AG04449 (cell line): ENCODE measurements at regions of chr14 and their contacts with region 1.

Region 1: GRCh38 chr14:23327947-23328744 is 6.9 kb downstream of the PABPN1 start:
- DNase-seq: no peak
- H3K4me3 ChIP-seq: no peak overlapping the region
- CTCF ChIP-seq: peak; percentile 73

Region 2: GRCh38 chr14:23047034-23047634 is 281.0 kb before region 1 on chr14:
- CTCF ChIA-PET with region 1: no interaction called
- POLR2A ChIA-PET with region 1: no interaction called
- DNase-seq: no peak
- H3K4me3 ChIP-seq: no peak overlapping the region
- CTCF ChIP-seq: no peak

Region 3: DNA sequence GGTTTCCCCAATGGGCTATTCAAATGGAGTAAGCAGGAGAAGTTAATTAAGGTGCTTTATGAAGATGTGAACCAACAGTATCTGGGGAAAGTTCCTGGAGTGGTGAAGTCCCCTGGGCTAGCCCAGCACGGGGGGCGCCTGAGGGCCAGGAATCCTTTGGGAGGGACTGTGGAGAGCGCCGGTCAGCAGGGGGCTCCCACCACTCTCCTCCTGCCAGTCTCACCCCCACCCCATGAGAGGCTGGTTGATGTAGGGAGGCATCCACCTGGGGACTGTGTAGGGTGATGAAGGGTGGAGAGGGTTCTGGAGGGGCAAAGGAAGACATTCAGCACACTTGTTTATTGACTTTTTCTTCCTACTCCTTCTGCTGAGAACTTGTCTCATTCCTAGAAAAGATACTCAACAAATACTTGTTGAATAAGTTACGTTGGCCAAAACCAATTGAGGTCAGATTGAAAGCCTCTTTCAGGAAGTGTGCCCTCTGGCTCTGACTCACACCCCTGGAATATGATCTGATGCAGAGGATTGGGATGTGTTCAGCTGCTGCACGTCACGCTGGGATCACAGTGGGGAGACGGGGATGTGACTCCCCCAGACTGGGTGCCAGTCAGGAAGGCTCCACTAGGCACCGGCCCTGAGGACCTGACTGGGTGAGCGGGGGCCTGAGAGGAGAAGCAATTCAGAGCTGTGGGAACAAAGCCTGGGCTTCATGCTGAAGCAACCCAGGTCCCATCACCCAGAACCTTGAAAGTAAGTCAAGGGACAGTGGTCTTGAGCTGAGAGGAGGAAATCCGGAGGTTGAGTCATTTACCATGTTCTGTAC is 213.3 kb before region 1 on chr14:
- CTCF ChIA-PET with region 1: no interaction called
- POLR2A ChIA-PET with region 1: no interaction called
- DNase-seq: peak; percentile 97
- H3K4me3 ChIP-seq: 0 out of 2 replicates have a peak overlapping the region, but pooled peaks have one; percentile 20
- CTCF ChIP-seq: peak; percentile 7

Region 4: DNA sequence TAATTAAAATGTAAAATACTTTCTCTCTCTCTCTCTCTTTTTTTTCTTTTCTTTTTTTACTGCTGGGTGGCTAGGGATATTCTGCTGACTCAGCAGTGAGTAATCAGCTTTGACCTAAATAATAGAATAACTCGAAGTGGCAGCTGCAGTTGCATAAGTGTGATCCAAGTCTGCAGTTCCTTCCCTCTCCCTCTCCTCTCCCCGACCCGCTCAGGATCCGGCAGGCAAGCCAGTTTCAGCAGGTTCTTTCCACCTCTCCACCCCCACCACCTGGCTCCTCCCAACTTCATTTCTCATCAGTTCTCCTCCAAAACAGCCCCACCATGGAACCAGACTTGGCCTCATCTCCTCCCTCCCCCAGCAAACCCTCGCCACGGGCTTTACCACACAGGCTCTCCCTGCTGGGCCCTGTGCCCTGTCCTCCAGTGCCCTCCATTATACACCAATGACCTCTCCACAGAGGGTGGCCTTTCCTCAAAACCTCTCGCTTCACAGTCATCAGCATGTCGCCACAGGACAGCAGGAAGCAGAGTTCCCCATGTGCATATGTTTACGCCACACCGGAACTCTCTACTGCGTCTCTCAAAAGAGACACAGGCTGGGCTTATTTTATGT is 167.1 kb before region 1 on chr14:
- CTCF ChIA-PET with region 1: no interaction called
- POLR2A ChIA-PET with region 1: no interaction called
- DNase-seq: no peak
- H3K4me3 ChIP-seq: no peak overlapping the region
- CTCF ChIP-seq: no peak

Region 5: DNA sequence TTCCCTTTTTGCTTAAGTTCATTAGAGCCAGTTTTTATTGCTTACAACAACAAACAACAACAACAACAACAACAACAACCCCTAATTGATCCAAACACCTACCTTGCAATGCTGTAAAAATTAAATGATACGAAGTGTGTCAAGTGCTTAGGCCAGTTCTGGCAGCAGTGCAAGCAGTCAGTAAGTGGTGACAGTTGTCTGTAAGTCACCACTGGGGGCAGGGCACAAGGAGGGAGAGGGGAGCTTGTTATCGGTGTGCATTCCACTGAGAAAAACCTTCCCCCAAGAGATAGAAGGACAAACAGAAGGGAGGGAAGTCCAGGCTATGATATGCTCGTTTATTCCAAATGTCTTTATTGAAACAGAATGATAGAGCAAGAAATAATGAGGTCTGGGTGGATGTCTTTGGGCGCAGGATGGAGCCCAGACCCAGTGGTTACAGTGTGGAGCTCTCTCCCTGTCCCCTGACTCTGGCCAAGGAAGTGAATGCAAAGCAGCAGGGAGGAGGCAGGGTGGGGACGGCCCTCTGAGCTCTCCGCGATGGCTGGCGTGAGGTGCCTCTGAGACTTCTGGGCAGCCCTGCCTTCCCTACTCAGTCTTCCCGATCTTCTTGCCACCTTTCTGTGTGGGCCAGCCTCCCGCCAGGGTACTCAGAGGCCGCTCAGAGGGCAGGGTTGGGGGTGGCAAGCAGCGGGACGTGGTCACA is 18.0 kb after region 1 on chr14:
- CTCF ChIA-PET with region 1: interaction called, 12 read pairs
- POLR2A ChIA-PET with region 1: no interaction called
- DNase-seq: no peak
- H3K4me3 ChIP-seq: no peak overlapping the region
- CTCF ChIP-seq: no peak

Region 6: GRCh38 chr14:23366426-23366921 is 38.3 kb after region 1 on chr14:
- CTCF ChIA-PET with region 1: interaction called, 34 read pairs
- POLR2A ChIA-PET with region 1: no interaction called
- DNase-seq: no peak
- H3K4me3 ChIP-seq: peak overlapping the region; percentile 74
- CTCF ChIP-seq: no peak

Region 7: DNA sequence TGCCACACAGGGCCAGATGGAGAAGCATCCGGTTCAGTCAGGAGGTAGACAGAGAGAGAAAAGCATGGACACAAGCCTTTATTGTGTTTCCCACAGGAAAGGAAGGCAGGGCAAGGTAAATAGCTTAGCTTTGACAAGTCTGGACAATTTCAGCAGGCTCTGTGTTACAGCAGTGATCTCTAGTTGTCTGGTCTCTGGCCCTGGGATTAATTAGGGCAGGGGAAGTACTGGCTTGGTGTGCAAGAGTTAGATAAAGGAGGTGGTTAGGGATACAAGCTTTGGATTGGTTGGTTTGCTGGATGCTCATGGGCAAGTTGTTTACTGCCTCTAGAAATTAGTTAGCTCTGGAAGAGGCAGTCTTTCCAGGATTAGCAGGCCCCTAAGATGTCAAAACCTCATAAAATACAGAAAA is 126.3 kb after region 1 on chr14:
- CTCF ChIA-PET with region 1: interaction called, 10 read pairs
- POLR2A ChIA-PET with region 1: no interaction called
- DNase-seq: no peak
- H3K4me3 ChIP-seq: no peak overlapping the region
- CTCF ChIP-seq: no peak

Region 8: DNA sequence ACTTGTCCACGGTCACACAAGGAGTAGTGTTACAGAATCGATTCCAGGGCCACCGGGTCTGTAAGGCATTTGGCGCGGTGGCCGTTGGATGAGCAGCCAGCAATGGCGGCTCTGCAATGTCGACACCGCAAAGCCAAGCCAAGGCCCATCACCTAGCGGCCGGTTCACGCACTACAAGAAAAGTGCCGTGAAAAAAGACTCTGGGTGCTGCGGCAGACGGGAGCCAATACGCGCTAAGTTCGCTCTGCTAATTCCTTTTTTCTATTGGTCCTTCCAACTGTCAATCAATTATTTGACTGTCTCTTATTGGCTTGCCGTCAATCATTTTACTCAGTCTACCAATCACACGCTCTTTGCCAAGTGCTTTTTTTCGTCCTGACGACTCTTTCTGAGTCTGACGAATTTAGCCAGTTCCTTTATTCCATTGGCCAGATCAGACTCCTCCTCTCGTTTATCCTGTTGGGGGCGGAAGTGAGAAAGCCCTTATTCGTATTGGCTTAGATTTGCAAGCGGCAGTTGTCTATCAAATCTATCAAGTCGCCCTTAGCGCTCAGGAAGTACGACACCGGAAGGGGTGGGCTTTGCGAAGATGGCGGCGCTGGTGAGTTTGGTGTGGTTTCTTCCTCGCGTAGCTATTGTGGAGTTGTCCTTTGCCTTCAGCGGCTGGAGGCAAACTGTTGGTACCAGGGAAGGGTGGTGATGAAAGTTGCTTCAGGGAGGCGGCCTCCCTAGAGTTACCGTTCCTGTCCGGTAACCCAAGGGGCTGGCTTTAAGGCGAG is 141.2 kb after region 1 on chr14 and contains the start of gene NGDN:
- CTCF ChIA-PET with region 1: interaction called, 12 read pairs
- POLR2A ChIA-PET with region 1: no interaction called
- DNase-seq: peak; percentile 100
- H3K4me3 ChIP-seq: peak within 1 kb of the TSS; percentile 98
- CTCF ChIP-seq: peak; percentile 82

Region 9: GRCh38 chr14:23567192-23568020 is 239.3 kb after region 1 on chr14 and contains the start of gene AP1G2:
- CTCF ChIA-PET with region 1: interaction called, 11 read pairs
- POLR2A ChIA-PET with region 1: no interaction called
- DNase-seq: no peak
- H3K4me3 ChIP-seq: peak within 1 kb of the TSS; percentile 64
- CTCF ChIP-seq: no peak